ENCODE measurements at regions of chr4 and their contacts with region 1.

Region 1: DNA sequence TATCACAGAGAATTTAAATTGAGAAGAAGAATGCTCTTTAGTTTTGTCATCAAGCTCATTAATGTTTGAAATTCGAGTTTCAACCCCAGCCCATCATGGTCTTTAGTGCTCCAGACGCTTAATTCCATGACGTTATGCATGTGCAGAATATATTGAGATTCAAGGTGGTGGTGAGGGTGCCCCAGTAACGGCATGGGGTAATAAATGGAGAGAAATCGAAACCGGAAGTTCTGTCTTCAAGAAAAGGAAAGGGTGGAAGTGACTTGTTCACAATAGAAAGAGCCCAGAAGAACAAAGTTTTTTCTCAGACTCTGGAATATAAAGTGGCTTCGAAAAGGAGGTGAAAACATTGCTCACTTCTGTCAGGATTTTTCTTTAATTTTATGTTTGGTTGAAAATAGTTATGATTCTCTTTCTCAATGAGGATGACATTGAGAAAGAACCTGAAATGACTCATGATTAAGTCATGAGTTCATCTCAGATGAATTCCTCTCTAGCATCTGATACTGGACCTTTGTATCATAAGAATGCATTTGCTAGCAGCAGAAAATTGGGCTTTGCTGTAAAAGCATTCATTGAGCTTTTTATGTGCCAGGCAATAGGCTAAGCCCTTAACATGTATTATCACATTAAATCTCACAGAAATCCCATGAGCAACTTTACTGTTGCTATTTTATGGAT is 779 bp upstream of the DDX60L start:
- DNase-seq: peak; percentile 51
- H3K4me3 Mint-ChIP-seq: peak overlapping the region; percentile 96
- H3K27ac Mint-ChIP-seq: peak overlapping the region; percentile 96
- H3K4me1 Mint-ChIP-seq: peaks cover 69% of the 10 kb centered on the region
- H3K27me3 Mint-ChIP-seq: no peaks in the 10 kb centered on the region

Region 2: DNA sequence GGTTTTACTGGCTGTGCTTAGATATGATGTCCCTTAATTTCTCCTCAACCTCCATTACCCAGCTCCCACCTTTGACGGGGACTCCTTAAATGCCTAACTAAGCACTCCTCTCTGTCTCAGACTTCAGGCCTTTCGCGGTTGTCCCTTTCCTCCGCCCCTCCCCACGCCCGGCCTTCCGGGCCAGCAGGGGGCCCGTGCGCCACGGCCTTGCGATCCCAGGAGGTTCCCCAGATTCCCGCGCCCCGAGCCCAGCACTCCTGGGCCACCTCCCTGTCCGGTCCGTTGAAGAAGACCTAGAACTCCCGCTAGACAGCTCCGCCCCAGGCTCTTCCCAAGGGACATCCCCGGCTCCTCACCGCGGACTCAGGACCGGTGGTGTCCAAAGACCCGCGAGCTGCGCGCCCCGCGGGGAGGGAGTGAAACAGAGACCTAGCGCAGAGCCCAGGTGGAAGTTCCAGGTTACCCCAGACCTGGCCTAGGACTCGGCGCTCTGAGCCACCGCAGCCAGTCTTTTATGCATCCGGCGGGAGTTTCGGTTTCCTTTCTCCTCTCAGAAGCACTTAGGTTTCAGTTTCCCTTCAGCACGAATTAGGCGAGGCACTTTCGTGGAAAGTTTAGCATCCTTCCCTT is 162.7 kb before region 1 on chr4 and contains the start of gene DDX60:
- CTCF ChIA-PET with region 1: no interaction called
- intact Hi-C with region 1: loop called (anchors 1 kb)
- DNase-seq: peak; percentile 90
- H3K4me3 Mint-ChIP-seq: peak within 1 kb of the TSS; percentile 85
- H3K27ac Mint-ChIP-seq: peak within 1 kb of the TSS; percentile 89
- H3K4me1 Mint-ChIP-seq: peaks cover 31% of the 10 kb centered on the region
- H3K27me3 Mint-ChIP-seq: no peaks in the 10 kb centered on the region
- total RNA-seq, gene DDX60: 26.8 to 28.2 TPM

Region 3: DNA sequence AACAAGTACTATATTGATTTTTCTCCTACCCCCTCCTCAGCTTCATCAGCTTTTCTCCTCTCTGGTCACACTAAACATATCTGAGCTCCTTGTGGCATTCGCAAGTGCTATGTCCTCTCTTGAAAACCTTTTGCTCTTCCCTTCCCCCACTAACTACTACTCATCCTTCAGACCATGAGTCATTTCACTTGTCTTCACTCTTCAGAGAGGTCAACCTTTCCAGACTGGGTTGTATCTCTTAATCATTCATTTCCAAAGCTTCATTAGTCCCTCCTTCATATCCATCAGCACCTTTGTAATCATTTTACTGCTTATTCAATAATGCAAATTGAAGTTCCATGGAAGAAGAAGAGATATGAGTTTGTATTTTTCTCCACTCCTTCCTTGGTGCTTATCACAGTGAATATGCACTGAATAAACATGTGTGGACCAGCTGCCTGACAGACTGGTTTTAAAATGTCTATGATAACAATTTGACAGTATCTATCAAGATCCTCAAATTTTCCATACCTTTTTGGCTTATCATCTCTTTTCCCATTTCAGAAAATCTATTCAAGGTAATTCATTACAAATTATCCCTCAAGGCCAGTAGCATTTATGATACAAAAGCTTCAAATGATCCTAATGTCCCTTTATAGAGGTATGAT is 29.2 kb before region 1 on chr4:
- CTCF ChIA-PET with region 1: no interaction called
- intact Hi-C with region 1: loop called (anchors 1 kb)
- DNase-seq: no peak
- H3K4me3 Mint-ChIP-seq: no peak overlapping the region
- H3K27ac Mint-ChIP-seq: peak overlapping the region; percentile 0
- H3K4me1 Mint-ChIP-seq: peaks cover 34% of the 10 kb centered on the region
- H3K27me3 Mint-ChIP-seq: no peaks in the 10 kb centered on the region

Region 4: DNA sequence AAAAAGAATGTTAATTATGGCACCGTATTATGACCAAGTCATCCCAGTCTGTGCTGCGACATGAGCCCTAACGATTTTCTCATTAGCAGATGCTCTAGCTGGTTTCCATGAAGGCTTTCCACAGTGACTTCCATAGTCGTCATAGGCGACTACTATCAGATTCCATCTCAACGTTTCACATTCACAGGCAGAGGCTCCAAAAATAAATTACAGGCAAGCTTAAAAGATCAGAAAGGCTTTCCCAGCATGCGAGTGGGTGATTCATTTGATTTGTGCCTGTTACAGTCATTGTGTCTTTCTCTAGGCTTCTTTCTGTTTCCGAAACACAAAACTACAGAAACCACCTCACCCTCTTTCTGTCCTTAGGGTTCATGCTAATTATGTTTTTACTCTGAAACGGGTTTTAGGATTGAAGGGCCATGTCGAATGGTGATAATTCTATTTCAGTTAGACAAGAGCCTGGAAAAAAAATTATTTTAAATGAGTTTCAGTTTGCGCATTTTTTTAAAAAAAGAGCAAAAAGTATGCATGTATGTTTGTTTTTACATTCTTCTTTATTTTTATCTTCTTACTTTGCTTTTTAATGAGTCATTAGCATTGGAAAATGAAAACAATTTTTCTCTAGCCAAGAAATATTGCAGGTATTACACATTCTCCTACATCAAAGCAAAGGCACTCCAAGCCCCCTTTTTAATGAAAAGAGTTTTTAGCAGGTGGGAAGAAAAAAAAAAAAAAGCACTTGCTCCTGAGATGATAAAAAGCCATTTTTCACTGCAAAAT is 59.2 kb after region 1 on chr4:
- CTCF ChIA-PET with region 1: no interaction called
- intact Hi-C with region 1: loop called (anchors 2 kb)
- DNase-seq: peak; percentile 31
- H3K4me3 Mint-ChIP-seq: no peak overlapping the region
- H3K27ac Mint-ChIP-seq: no peak overlapping the region
- H3K4me1 Mint-ChIP-seq: peaks cover 9% of the 10 kb centered on the region
- H3K27me3 Mint-ChIP-seq: peaks cover 7% of the 10 kb centered on the region

Region 5: DNA sequence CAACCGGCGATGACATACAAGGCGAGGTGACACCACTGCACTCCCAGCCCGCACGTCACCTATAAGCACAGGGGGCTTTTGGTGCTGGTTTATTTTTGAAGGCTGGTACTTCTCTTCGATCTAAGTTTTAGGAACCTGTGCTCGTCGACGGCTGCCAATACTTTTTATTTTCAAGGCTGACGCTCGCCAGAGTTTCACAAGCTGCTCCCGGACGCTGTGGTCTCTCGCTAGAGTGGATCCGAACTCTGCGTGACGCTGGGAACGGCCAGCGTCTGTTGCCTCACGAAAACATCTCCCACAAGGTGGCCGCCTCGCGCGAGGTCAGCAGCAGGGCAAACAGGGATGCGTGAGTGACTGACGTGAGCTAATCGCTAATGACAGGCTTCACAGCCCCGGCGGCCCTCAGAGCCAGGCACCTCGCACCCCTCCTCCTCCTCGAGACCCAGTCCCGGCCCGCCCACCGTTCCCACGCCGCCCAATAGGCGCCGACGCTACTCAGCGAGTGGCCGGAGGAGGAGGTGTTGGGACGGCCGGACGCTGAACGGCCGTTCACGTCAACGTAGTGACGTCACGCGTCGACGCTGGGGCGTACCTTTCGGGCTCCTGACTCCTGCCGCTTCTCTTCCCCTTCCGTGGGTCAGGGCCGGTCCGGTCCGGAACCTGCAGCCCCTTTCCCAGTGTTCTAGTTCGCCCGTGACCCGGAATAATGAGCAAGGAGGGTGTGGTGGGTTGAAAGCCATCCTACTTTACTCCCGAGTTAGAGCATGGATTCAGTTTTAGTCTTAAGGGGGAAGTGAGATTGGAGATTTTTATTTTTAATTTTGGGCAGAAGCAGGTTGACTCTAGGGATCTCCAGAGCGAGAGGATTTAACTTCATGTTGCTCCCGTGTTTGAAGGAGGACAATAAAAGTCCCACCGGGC is 1139.1 kb after region 1 on chr4 and contains the start of gene CLCN3:
- CTCF ChIA-PET with region 1: no interaction called
- intact Hi-C with region 1: loop called (anchors 2 kb)
- DNase-seq: peak; percentile 90
- H3K4me3 Mint-ChIP-seq: peak within 1 kb of the TSS; percentile 93
- H3K27ac Mint-ChIP-seq: peak within 1 kb of the TSS; percentile 96
- H3K4me1 Mint-ChIP-seq: peaks cover 59% of the 10 kb centered on the region
- H3K27me3 Mint-ChIP-seq: no peaks in the 10 kb centered on the region
- total RNA-seq, gene CLCN3: 17.4 to 18.4 TPM

Region 6: GRCh38 chr4:170027181-170027829 is 1546.2 kb after region 1 on chr4:
- CTCF ChIA-PET with region 1: no interaction called
- intact Hi-C with region 1: loop called (anchors 10 kb)
- DNase-seq: peak; percentile 93
- H3K4me3 Mint-ChIP-seq: peak overlapping the region; percentile 83
- H3K27ac Mint-ChIP-seq: peak overlapping the region; percentile 38
- H3K4me1 Mint-ChIP-seq: peaks cover 7% of the 10 kb centered on the region
- H3K27me3 Mint-ChIP-seq: peaks cover 15% of the 10 kb centered on the region